Posterior vena cava (tissue), 2 donors: ENCODE measurements at regions of chr1 and their contacts with region 1.

Region 1: DNA sequence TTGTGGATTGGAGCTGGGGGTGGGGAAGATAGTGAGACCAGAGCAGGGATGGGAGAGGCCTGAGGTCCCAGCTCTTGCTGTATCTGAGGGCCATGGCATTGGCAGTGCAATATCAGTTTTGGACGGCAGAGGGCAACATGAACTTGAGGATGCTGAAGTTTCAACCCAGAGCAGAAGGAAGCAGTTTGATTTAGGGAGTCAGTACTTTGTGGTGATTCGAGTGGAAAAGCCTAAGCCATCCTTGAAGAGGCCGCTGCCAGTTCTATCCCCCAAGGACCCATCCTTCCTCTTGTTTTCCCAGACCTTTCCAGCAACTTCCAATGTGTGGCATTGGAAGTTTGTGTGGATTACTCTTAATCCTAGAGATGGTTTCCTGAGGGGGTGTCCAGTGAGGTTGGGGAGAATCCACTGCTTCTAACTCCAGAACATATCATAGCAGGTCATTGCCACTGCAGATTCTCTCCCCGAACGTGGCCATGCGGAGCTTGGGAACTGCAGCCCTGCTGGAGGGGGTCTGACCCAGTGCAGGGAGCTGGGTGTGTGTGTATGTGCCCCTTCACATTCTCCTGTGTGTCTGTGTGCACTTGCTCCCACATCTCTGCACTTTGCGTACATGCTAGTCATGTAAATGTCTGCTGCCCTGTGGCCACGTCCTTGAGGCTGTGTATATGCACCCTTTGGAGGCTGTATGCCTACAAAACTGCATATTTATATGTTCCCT is 24.1 kb downstream of the SLC26A9 start:
- DNase-seq: peak; percentile 92

Region 2: DNA sequence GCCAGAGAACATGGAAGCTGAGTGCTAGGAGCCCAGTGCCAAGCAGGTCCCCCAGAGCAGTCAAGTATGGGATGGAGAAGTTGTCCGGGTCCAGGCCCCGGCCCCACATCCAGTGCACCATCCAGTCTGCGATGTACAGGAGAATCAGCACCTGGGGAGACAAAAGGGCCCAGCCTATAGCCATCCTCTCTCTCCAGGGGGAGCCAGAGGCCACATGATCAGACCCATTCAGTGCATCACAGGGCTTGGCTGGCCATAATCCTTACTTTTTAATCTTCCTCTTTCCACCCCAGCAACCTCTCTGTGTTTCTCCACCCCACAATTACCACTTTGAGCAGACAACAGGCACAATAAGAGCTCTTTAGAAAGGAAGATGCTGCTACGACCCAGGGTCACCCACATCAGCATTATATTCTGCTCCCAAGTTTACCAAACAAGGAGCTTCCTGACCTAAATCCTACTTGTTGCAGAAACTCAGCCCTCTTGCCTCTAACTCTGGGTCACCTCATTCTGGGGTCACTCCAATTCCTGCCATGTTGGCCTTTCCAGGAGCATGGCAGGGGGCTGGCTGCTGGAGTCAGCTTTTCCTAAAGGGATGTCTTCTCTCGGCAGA is 127.5 kb before region 1 on chr1:
- intact Hi-C with region 1: loop called in 1 of 2 experiments (anchors 10 kb)
- DNase-seq: no peak

Region 3: GRCh38 chr1:205977402-205978014 is 58.3 kb after region 1 on chr1:
- intact Hi-C with region 1: loop called (anchors 2 kb)
- DNase-seq: peak; percentile 88

Region 4: DNA sequence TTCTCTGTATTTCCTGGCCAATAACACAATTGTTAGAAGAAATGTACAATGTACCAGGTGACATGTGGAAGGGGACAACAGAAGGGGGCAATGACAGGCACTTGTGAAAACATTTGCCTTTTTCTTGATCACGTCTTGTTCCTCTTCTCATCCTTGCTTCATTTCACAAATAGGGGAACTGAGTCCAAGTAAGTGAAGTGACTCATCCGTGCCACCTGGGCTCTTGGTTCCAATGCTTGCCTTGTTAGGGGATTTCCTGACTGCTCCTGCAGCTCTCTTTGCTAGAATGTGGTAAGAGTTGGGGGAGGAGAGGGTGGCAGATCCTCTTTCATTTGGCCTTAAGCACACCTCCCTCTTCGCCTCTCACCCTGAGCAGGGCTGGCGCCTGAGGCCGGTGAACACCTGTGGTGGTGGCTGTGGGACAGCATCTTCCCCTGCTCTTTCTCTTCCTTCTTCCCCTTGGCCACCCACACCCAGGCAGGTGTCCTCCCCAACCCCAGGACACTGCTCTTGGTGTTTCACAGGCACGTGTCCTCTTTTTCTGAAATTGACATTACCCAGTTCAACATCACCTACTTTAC is 131.6 kb after region 1 on chr1:
- intact Hi-C with region 1: no loop called
- DNase-seq: no peak

Region 5: DNA sequence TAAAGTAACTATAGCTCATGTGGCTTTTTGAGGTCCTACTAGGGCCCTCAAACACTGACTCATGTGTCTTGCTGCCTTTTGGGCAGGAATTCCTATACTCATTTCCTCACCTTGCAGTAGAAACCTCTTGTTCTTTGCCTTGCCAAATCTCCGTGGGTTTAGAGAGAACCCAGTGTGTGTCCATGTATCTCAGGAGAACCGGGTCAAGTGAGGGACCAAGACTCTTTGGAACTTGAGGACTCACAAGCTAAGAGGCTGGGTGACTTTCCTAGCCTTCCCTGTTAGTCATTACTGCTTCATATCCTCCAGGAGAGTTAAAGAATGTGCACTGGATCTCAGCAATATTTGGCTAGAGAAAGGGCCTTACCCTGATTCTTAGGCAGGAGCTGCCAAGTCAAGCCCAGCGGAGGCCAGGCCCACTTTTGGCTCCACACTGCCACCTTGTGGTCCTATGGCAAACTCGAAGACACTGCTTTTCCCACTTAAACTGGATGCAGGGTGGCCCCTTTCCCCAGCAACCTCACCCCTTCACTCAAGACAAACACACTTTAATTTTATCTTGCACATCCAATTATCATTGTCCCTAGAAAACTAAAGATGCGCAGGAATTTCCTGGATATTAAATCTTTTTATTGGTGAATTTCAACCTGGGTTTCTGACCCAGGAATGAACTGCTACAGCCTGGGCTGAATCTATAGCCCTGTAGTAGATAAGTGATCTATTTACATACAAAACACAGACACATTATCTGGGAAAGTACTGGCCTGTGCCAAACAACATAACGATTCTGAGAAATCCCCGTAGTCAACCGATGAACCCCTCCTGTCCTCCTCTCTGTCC is 187.4 kb after region 1 on chr1:
- intact Hi-C with region 1: loop called in 1 of 2 experiments (anchors 10 kb)
- DNase-seq: peak; percentile 94